ENCODE measurements at regions of chr1 and their contacts with region 1.

Region 1: GRCh38 chr1:36323597-36324352 is at the start of gene EVA1B:
- DNase-seq: peak; percentile 55 to 91
- H3K4me3 ChIP-seq: peak within 1 kb of the TSS; percentile 68 to 75
- H3K27ac ChIP-seq: peak within 1 kb of the TSS; percentile 91 to 98
- H3K4me1 ChIP-seq: peaks cover 14 to 29% of the 10 kb centered on the region in 2 donors
- H3K27me3 ChIP-seq: no peaks in the 10 kb centered on the region
- CTCF ChIP-seq: no peak
- total RNA-seq, gene EVA1B: 251 TPM

Region 2: DNA sequence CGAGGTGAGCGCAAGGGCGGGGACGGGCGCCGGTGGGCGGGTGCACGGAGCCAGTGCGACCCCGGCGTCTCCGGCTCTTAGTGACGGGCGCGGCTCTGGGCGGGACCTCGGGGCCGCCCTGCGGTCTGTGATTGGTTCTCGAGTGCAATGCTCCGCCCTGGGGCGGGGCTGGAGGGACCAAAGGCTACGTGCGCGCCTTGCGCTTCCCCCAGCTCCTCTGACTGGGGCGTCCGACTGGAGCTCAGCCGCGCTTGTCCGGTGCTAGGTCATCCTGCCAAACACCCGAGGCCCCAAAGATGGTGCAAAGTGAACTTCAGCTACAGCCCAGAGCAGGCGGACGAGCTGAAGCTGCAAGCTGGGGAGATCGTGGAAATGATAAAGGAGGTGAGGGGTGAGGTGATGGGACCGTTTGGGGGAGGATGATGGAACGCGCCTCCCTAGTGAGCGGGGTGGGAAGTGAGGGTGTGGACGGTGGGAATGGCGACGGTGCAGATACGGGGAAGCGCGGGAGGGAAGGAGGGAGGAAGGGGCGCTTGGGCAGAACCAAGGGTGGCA is 16.8 kb before region 1 on chr1:
- intact Hi-C with region 1: loop called (anchors 1 kb)
- DNase-seq: peak; percentile 79 to 95
- H3K4me3 ChIP-seq: peak overlapping the region; percentile 84 to 88
- H3K27ac ChIP-seq: peak overlapping the region; percentile 66 to 69
- H3K4me1 ChIP-seq: peaks cover 4 to 11% of the 10 kb centered on the region in 2 donors
- H3K27me3 ChIP-seq: no peaks in the 10 kb centered on the region
- CTCF ChIP-seq: no peak

Region 3: DNA sequence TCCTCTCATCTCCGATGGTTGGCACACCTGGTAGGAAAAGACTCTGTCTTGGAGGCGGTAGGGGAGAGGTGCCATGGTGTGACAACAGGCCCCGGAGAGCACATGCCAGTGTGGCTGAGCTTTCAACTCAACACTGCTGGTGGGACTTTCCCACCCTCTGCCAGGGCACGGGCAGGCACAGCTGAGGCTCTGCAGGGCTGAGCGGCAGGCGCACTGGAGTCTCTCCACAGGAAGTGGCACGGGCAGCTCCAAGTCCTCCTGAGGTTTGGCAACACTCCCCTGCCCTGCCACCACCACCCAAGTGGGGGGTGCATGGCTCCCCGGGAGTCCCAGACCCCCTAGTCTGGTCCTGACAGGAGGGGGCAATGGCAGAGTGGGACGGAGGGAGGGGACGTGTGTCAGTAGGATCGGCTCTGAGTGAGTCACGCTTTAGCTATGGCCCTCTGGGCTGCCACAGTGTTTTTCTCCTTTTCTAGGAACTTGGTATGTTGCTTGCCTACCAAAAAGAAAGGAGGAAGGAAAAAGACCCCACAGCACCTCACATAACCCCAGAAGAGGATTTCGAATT is 27.0 kb after region 1 on chr1:
- intact Hi-C with region 1: loop called (anchors 2 kb)
- DNase-seq: peak in 1 of 2 donors; percentile 86
- H3K4me3 ChIP-seq: peak overlapping the region in 1 of 2 donors; percentile 30
- H3K27ac ChIP-seq: peak overlapping the region; percentile 84 to 89
- H3K4me1 ChIP-seq: peaks cover 39 to 43% of the 10 kb centered on the region in 2 donors
- H3K27me3 ChIP-seq: no peaks in the 10 kb centered on the region
- CTCF ChIP-seq: no peak

Region 4: DNA sequence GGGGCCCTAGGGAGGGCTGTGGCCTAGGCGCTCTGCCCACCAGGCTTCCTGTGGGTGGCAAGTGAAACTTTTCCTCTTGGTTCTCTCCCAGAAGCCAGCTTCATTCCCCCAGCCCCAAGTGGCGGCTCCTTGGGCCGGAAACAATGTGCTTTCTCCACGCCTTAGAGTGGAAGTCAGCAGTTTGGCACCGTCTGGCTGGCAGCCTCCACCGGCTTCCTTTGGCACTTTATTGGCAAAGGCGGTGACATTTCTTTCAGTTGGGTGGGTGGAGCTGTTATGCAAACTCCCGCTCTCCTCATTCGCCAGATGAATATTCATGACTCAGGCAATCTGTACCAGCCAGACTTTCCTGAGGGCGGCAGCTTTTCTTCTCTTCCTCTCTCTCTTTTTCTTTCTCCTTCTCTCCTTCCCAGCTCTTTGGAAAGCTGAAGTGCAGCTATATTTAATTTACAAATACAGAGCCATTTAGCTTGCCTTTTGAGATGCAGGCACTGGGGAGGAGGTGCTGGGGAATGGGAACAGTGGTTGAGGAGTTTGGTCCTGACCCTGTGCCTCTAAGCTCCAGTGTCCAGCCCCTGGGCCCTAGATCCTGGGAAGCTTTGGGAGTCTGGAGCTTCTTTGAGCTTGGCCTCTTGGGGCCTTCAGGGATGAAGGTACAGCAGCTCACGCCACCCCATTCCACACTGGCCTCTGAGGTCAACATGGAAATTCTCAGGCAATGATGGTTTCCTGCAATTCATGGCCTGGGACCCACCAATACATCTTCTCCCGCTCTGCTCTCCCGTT is 1790.7 kb after region 1 on chr1:
- intact Hi-C with region 1: loop called (anchors 5 kb)
- DNase-seq: peak; percentile 27 to 86
- H3K4me3 ChIP-seq: no peak overlapping the region
- H3K27ac ChIP-seq: peak overlapping the region; percentile 56 to 85
- H3K4me1 ChIP-seq: peaks cover 4 to 10% of the 10 kb centered on the region in 2 donors
- H3K27me3 ChIP-seq: no peaks in the 10 kb centered on the region
- CTCF ChIP-seq: no peak